Breast epithelium (tissue), 4 donors: ENCODE measurements at regions of chr16 and their contacts with region 1.

Region 1: GRCh38 chr16:47713225-47713595 is 252.1 kb downstream of the PHKB start:
- DNase-seq: no peak
- H3K4me3 ChIP-seq: no peak overlapping the region
- H3K27ac ChIP-seq: no peak overlapping the region
- H3K4me1 ChIP-seq: no peaks in the 10 kb centered on the region
- H3K27me3 ChIP-seq: no peaks in the 10 kb centered on the region
- CTCF ChIP-seq: no peak
- POLR2A ChIP-seq: no peak

Region 2: DNA sequence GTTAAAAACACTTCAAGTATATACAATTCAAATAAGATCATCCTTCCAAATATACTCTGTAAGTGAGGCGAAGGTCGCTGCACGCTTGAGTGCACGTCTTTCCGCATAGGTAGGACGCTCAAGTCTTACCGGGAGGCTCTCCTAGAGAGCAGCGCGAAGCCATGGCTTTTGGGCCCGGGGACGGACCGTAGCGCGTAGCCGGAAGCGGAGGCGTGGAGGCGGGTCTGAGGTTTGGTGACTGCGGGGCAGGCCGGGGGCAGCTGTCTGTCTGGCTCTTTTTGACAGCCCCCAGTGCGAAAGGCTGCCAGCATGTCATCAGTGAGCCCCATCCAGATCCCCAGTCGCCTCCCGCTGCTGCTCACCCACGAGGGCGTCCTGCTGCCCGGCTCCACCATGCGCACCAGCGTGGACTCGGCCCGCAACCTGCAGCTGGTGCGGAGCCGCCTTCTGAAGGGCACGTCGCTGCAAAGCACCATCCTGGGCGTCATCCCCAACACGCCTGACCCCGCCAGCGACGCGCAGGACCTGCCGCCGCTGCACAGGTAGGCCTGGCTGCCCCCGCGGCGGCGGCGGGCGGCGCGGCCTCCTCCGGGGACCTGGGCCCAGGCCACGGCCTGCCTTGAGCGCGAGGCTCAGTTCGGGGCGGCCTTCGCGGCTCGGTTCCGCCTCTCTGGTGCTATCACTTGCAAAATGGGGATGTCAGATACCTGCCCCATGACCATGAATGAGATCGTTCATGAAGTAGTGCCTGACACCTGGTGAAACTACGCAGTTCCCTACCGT is 531.1 kb after region 1 on chr16 and contains the start of gene LONP2:
- intact Hi-C with region 1: loop called (anchors 10 kb)
- DNase-seq: peak; percentile 85 to 89
- H3K4me3 ChIP-seq: peak within 1 kb of the TSS; percentile 87 to 96 (median 90)
- H3K27ac ChIP-seq: peak within 1 kb of the TSS; percentile 95
- H3K4me1 ChIP-seq: peaks cover 0 to 20% of the 10 kb centered on the region in 2 donors
- H3K27me3 ChIP-seq: no peaks in the 10 kb centered on the region
- CTCF ChIP-seq: no peak
- POLR2A ChIP-seq: no peak
- total RNA-seq, gene LONP2: 66.6 to 106 (median 98.9) TPM